ENCODE measurements at regions of chr3 and their contacts with region 1.

Region 1: GRCh38 chr3:157606011-157606851 is 103.0 kb upstream of the VEPH1 start:
- DNase-seq: peak; percentile 84
- ATAC-seq: peak; percentile 96
- H3K4me3 Mint-ChIP-seq: no peak overlapping the region; the same call in 1 of the 2 replicates
- H3K27ac Mint-ChIP-seq: peak overlapping the region; percentile 44; the same call in 1 of the 2 replicates
- H3K4me1 Mint-ChIP-seq: peaks cover 13% of the 10 kb centered on the region
- H3K27me3 Mint-ChIP-seq: no peaks in the 10 kb centered on the region
- CTCF ChIP-seq: peak; percentile 87

Region 2: GRCh38 chr3:157369727-157370421 is 236.4 kb before region 1 on chr3:
- CTCF ChIA-PET with region 1: no interaction called
- POLR2A ChIA-PET with region 1: no interaction called
- DNase-seq: no peak
- ATAC-seq: no peak
- H3K4me3 Mint-ChIP-seq: no peak overlapping the region
- H3K27ac Mint-ChIP-seq: peak overlapping the region; percentile 23; the same call in 1 of the 2 replicates
- H3K4me1 Mint-ChIP-seq: peaks cover 12% of the 10 kb centered on the region
- H3K27me3 Mint-ChIP-seq: no peaks in the 10 kb centered on the region
- CTCF ChIP-seq: no peak

Region 3: GRCh38 chr3:157532529-157533297 is 73.5 kb before region 1 on chr3:
- CTCF ChIA-PET with region 1: interaction called, 41 read pairs
- POLR2A ChIA-PET with region 1: no interaction called
- DNase-seq: no peak
- ATAC-seq: peak; percentile 94
- H3K4me3 Mint-ChIP-seq: no peak overlapping the region
- H3K27ac Mint-ChIP-seq: no peak overlapping the region
- H3K4me1 Mint-ChIP-seq: no peaks in the 10 kb centered on the region
- H3K27me3 Mint-ChIP-seq: no peaks in the 10 kb centered on the region
- CTCF ChIP-seq: peak; percentile 56

Region 4: DNA sequence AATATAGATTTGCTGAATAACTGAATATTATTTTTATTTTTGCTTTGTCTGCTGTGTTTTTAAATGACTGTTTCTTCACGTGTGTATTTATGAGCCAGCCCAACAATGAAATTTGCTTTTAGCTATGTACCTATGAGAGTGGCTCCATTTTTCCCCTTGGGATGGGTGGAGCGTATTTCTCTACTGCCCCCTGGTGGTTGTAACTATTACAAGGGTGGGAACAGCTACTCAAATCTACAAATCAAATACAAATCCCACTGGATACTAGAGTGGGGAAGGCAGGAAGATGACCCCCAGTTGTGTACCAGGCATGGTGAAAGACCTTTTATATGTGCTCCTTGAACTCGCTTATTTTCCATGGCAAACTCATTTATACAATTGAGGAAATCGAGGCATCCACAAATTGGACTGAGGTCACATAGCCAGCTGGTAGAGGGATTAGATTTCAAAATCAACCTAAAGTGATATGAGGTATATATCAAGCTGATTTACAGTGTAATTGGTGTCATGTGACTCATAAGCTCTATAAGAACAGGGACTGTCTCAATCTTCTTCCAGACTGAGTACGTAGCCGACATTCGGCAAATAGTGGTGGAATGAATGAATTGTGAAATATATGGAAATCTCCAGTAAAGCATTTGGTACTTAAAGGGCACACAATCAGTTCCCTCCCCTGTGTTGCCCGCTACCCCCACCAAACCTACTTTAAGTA is 33.5 kb before region 1 on chr3:
- CTCF ChIA-PET with region 1: interaction called, 17 read pairs
- POLR2A ChIA-PET with region 1: no interaction called
- DNase-seq: peak; percentile 42
- ATAC-seq: peak; percentile 97
- H3K4me3 Mint-ChIP-seq: no peak overlapping the region
- H3K27ac Mint-ChIP-seq: no peak overlapping the region
- H3K4me1 Mint-ChIP-seq: no peaks in the 10 kb centered on the region
- H3K27me3 Mint-ChIP-seq: no peaks in the 10 kb centered on the region
- CTCF ChIP-seq: peak; percentile 84

Region 5: DNA sequence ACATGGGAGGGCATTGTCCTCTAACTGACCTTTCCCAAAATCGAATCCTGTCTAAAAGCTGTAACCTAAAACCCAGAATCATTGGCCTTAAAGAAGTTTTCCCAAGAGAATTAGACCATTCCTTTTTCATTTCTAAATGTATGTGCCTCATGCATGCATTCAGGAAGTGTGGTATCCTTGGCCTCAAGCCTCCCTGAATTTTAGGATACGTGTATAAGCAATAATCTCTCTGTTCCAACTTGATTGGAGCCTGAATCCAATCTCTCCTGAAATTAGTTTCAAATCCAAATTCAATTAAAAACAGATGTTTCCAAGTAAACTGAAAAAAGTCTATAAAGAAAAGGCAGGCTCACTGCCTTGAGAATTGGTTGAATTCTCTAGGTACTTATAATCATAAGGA is 17.0 kb before region 1 on chr3:
- CTCF ChIA-PET with region 1: interaction called, 30 read pairs
- POLR2A ChIA-PET with region 1: no interaction called
- DNase-seq: no peak
- ATAC-seq: no peak
- H3K4me3 Mint-ChIP-seq: no peak overlapping the region
- H3K27ac Mint-ChIP-seq: no peak overlapping the region
- H3K4me1 Mint-ChIP-seq: peaks cover 14% of the 10 kb centered on the region
- H3K27me3 Mint-ChIP-seq: no peaks in the 10 kb centered on the region; the same call in 1 of the 2 replicates
- CTCF ChIP-seq: no peak

Region 6: DNA sequence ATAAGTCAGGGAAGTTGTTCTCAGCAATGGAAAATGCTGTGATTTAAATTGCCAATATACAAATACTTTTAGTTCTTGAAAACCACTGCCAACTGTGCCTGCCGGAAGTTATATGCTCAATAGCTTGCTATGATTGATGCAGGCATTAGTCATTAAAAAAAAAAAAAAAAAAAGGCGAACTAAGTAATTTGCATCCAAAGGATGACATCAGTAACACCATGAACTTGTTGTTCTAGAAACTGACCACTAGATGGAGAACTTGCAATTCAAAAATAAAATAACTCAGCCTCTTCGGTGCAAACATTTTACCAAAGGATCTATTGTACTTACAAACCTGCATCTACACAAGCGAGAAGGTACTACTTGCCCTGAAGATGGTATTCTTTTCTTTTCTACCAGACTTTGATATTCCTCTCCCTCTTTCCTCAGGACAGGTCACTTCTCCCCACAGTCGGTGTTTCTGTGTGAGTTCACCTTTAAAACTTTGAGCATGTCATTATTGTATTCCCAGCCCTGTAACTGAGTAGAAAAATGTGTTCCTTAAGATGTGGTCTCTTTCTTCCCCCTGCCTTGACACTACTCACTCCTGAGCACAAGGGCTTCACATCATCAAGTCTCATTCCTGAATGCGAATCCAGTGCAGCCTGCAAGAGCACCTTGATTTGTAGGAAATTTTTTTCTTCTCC is 12.0 kb after region 1 on chr3:
- CTCF ChIA-PET with region 1: interaction called, 12 read pairs
- POLR2A ChIA-PET with region 1: no interaction called
- DNase-seq: no peak
- ATAC-seq: peak; percentile 85
- H3K4me3 Mint-ChIP-seq: no peak overlapping the region
- H3K27ac Mint-ChIP-seq: no peak overlapping the region; the same call in 1 of the 2 replicates
- H3K4me1 Mint-ChIP-seq: peaks cover 5% of the 10 kb centered on the region
- H3K27me3 Mint-ChIP-seq: no peaks in the 10 kb centered on the region
- CTCF ChIP-seq: no peak; the same call in 1 of the 2 replicates